ENCODE measurements at regions of chr17 and their contacts with region 1.

Region 1: DNA sequence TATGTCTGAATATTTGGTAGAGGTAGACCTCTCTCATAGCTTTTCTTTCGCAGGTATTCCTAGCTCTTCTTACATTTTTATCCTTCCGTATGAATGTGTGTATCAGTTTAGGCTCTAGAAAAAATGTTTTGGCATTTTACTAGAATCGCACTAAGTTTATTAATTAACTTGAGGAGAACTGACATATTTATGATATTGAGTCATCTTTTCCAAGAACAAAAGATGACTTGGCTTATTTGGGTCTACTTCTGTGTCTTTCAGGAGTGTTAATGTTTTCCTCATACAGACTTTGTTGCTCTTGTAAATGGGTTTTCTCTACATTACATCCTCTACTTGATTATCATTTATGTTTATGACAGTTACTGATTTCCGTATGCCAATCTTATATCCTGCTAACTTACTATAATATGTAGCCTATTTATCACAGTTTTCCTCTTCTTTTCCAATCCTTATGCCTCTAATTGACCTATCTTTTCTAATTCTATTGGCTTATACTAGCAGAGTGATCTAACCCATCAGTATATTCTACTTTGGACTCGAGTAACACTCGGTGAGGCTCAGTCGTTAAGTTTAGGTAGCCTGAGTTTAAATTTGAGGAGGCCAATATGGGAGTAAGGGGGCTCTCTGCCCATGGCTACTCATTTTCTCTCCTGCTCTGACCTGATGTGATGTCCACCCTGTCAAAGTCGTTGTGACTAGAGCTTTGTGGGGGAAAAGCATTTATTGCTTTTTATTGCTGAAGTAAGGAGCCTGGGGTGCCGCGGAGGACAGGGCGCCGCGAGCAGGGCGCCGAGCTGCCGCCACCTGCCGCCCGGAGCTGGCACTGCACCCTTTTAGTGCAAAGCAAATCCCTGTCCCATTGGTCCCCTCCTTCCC is 20.0 kb downstream of the ST6GALNAC1 start:
- DNase-seq: peak; percentile 58 to 87 (median 76)
- ATAC-seq: peak; percentile 100
- H3K4me3 ChIP-seq: no peak overlapping the region
- H3K4me3 Mint-ChIP-seq: no peak overlapping the region
- H3K27ac ChIP-seq: no peak overlapping the region
- H3K27ac Mint-ChIP-seq: no peak overlapping the region
- H3K4me1 ChIP-seq: peaks cover 3% of the 10 kb centered on the region
- H3K4me1 Mint-ChIP-seq: peaks cover 4% of the 10 kb centered on the region
- H3K27me3 ChIP-seq: no peaks in the 10 kb centered on the region
- H3K27me3 Mint-ChIP-seq: no peaks in the 10 kb centered on the region
- CTCF ChIP-seq: peak; percentile 95

Region 2: GRCh38 chr17:76467366-76467765 is 156.1 kb before region 1 on chr17 and contains the start of gene AANAT:
- CTCF ChIA-PET with region 1: interaction called, 4 read pairs
- POLR2A ChIA-PET with region 1: no interaction called
- intact Hi-C with region 1: loop called in 1 of 2 experiments (anchors 2 kb)
- DNase-seq: no peak
- ATAC-seq: no peak
- H3K4me3 ChIP-seq: no peak within 1 kb of the TSS
- H3K4me3 Mint-ChIP-seq: no peak within 1 kb of the TSS
- H3K27ac ChIP-seq: no peak within 1 kb of the TSS
- H3K27ac Mint-ChIP-seq: no peak within 1 kb of the TSS
- H3K4me1 ChIP-seq: peaks cover 3% of the 10 kb centered on the region
- H3K4me1 Mint-ChIP-seq: peaks cover 4% of the 10 kb centered on the region
- H3K27me3 ChIP-seq: no peaks in the 10 kb centered on the region
- H3K27me3 Mint-ChIP-seq: no peaks in the 10 kb centered on the region
- CTCF ChIP-seq: no peak
- total RNA-seq, gene AANAT: not detected

Region 3: DNA sequence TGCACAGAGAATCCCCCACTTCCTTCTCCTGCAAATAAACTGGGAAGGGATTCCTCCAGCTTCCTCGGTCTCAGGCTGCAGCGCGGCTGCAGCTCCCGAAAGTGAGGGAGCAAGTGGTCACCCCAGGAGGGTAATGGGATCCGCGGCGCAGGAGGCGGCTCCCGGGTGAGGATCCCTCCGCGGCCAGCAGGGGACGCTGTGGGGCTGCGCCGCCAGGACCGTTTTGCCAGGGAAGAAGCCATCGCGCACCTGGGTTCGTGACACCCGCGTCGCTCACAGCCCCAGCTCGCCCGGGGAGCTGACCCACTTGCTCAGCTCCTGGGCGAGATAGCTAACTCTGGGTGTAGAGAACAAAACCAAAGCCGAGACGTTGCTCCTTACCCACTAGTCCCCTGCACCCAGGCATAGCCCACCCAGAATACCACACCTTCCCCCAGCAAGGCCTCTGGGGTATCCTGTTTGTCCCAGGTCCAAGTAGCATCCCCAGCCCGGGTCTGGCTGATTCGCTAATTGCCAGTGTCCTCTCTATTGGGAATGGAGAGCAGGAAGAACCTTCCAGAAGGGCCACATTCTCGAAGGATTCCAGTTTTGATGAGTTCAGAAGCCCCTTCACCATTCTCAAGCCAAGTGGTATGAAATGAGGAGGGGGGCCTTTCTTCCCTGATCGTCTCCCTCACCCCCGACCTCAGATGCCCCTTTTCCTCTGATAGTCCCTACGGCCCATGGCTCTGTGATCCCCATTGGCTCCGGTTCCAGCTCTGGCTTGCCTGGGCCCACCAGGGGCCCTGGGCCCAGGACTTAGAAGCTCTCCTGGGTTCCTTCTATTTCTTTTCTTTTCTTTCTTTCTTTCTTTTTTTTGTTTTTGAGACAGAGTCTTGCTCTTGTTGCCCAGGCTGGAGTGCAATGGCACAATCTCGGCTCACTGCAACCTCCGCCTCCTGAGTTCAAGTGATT is 100.1 kb before region 1 on chr17:
- CTCF ChIA-PET with region 1: interaction called, 68 read pairs
- POLR2A ChIA-PET with region 1: no interaction called
- intact Hi-C with region 1: loop called (anchors 1 kb)
- DNase-seq: peak; percentile 64 to 93 (median 81)
- ATAC-seq: peak; percentile 79
- H3K4me3 ChIP-seq: no peak overlapping the region
- H3K4me3 Mint-ChIP-seq: peak overlapping the region; percentile 43
- H3K27ac ChIP-seq: no peak overlapping the region
- H3K27ac Mint-ChIP-seq: peak overlapping the region; percentile 84
- H3K4me1 ChIP-seq: peaks cover 23% of the 10 kb centered on the region
- H3K4me1 Mint-ChIP-seq: peaks cover 25% of the 10 kb centered on the region
- H3K27me3 ChIP-seq: no peaks in the 10 kb centered on the region
- H3K27me3 Mint-ChIP-seq: no peaks in the 10 kb centered on the region
- CTCF ChIP-seq: peak; percentile 99

Region 4: GRCh38 chr17:76557368-76558197 is 65.9 kb before region 1 on chr17:
- CTCF ChIA-PET with region 1: interaction called, 22 read pairs
- POLR2A ChIA-PET with region 1: interaction called, 4 read pairs
- intact Hi-C with region 1: loop called in 1 of 2 experiments (anchors 2 kb)
- DNase-seq: peak; percentile 86 to 97 (median 92)
- ATAC-seq: peak; percentile 78
- H3K4me3 ChIP-seq: peak overlapping the region; percentile 70 to 75
- H3K4me3 Mint-ChIP-seq: peak overlapping the region; percentile 95
- H3K27ac ChIP-seq: peak overlapping the region; percentile 81 to 95
- H3K27ac Mint-ChIP-seq: peak overlapping the region; percentile 97
- H3K4me1 ChIP-seq: peaks cover 49% of the 10 kb centered on the region
- H3K4me1 Mint-ChIP-seq: peaks cover 63% of the 10 kb centered on the region
- H3K27me3 ChIP-seq: no peaks in the 10 kb centered on the region
- H3K27me3 Mint-ChIP-seq: no peaks in the 10 kb centered on the region
- CTCF ChIP-seq: peak; percentile 35

Region 5: GRCh38 chr17:76635659-76636360 is 12.3 kb after region 1 on chr17:
- CTCF ChIA-PET with region 1: interaction called, 19 read pairs
- POLR2A ChIA-PET with region 1: no interaction called
- intact Hi-C with region 1: no loop called
- DNase-seq: no peak
- ATAC-seq: no peak
- H3K4me3 ChIP-seq: no peak overlapping the region
- H3K4me3 Mint-ChIP-seq: no peak overlapping the region
- H3K27ac ChIP-seq: no peak overlapping the region
- H3K27ac Mint-ChIP-seq: no peak overlapping the region
- H3K4me1 ChIP-seq: no peaks in the 10 kb centered on the region
- H3K4me1 Mint-ChIP-seq: no peaks in the 10 kb centered on the region
- H3K27me3 ChIP-seq: no peaks in the 10 kb centered on the region
- H3K27me3 Mint-ChIP-seq: peaks cover 3% of the 10 kb centered on the region
- CTCF ChIP-seq: no peak

Region 6: GRCh38 chr17:76714822-76715495 is 91.5 kb after region 1 on chr17:
- CTCF ChIA-PET with region 1: interaction called, 14 read pairs
- POLR2A ChIA-PET with region 1: no interaction called
- intact Hi-C with region 1: no loop called
- DNase-seq: peak; percentile 57 to 88 (median 76)
- ATAC-seq: peak; percentile 5
- H3K4me3 ChIP-seq: peak overlapping the region in 1 of 2 experiments; percentile 4
- H3K4me3 Mint-ChIP-seq: peak overlapping the region; percentile 55
- H3K27ac ChIP-seq: peak overlapping the region; percentile 71 to 83
- H3K27ac Mint-ChIP-seq: peak overlapping the region; percentile 97
- H3K4me1 ChIP-seq: peaks cover 54% of the 10 kb centered on the region
- H3K4me1 Mint-ChIP-seq: peaks cover 57% of the 10 kb centered on the region
- H3K27me3 ChIP-seq: no peaks in the 10 kb centered on the region
- H3K27me3 Mint-ChIP-seq: no peaks in the 10 kb centered on the region
- CTCF ChIP-seq: peak; percentile 95

Measured in CD8-positive, alpha-beta T cell (primary cell).